ENCODE measurements at regions of chr4 and their contacts with region 1.

Region 1: GRCh38 chr4:113781439-113782040 is 20.0 kb upstream of the CAMK2D start:
- DNase-seq: no peak
- ATAC-seq: peak; percentile 80
- H3K4me3 ChIP-seq: no peak overlapping the region
- H3K27ac ChIP-seq: no peak overlapping the region
- H3K4me1 ChIP-seq: no peaks in the 10 kb centered on the region
- H3K27me3 ChIP-seq: no peaks in the 10 kb centered on the region
- CTCF ChIP-seq: peak; percentile 45 to 47 (median 47); a peak in 4 of 6 replicates
- EP300 ChIP-seq: no peak
- POLR2A ChIP-seq: no peak
- RAD21 ChIP-seq: peak; percentile 65

Region 2: DNA sequence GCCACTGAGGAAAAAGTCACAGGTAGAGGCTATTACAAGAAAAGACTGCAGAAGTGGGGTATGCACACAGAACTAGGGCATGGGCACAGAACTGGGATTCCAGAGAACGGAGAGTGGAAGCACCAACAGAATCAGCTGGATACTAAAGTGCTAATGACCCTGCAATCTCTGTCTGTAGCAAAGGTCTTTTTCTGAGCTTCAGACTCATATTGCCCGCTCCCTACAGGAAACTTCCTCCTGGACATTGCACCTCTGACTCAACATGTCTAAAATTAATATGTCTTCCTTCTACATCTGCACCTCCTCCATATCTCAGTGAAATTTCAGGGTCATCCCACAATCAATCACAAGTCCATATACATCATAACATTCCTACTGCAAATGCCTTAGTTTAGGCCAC is 14.7 kb before region 1 on chr4:
- CTCF ChIA-PET with region 1: interaction called, 5 read pairs
- POLR2A ChIA-PET with region 1: interaction called, 4 read pairs
- RAD21 ChIA-PET with region 1: interaction called, 7 read pairs
- SMC1A ChIA-PET with region 1: interaction called, 27 read pairs
- in situ Hi-C with region 1: no loop called
- intact Hi-C with region 1: no loop called
- DNase-seq: no peak
- ATAC-seq: no peak
- H3K4me3 ChIP-seq: no peak overlapping the region
- H3K27ac ChIP-seq: no peak overlapping the region
- H3K4me1 ChIP-seq: no peaks in the 10 kb centered on the region
- H3K27me3 ChIP-seq: no peaks in the 10 kb centered on the region
- CTCF ChIP-seq: no peak
- EP300 ChIP-seq: no peak
- POLR2A ChIP-seq: no peak
- RAD21 ChIP-seq: no peak

Region 3: GRCh38 chr4:113806850-113807249 is 25.3 kb after region 1 on chr4:
- CTCF ChIA-PET with region 1: interaction called, 5 read pairs
- POLR2A ChIA-PET with region 1: no interaction called
- RAD21 ChIA-PET with region 1: interaction called, 3 read pairs
- SMC1A ChIA-PET with region 1: interaction called, 10 read pairs
- in situ Hi-C with region 1: no loop called
- intact Hi-C with region 1: no loop called
- DNase-seq: no peak
- ATAC-seq: peak; percentile 39; the same call in 2 of the 3 replicates
- H3K4me3 ChIP-seq: no peak overlapping the region
- H3K27ac ChIP-seq: peak overlapping the region; percentile 4; the same call in 1 of the 2 replicates
- H3K4me1 ChIP-seq: peaks cover 3% of the 10 kb centered on the region; the same call in 1 of the 2 replicates
- H3K27me3 ChIP-seq: no peaks in the 10 kb centered on the region
- CTCF ChIP-seq: no peak
- EP300 ChIP-seq: no peak
- POLR2A ChIP-seq: no peak
- RAD21 ChIP-seq: no peak

Region 4: DNA sequence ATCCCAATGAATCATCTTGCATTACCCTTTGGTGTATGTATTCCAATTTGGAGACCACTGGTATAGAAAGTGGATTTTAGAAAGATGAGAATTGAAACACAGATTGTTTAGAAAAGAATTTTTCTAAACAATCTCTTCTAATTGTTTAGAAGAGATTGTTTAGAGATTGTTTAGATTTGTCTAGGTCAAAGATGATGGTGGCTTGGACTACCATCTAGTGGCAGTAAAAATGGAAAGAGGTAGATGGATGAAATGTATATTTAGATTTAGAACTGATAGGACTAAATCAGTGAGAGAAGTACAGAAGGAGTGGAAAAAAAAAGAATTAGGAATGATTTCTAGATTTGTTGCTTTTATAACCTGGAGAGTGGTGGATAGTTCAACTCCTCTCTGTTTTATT is 127.3 kb after region 1 on chr4:
- CTCF ChIA-PET with region 1: interaction called, 4 read pairs
- POLR2A ChIA-PET with region 1: no interaction called
- RAD21 ChIA-PET with region 1: no interaction called
- SMC1A ChIA-PET with region 1: interaction called, 4 read pairs
- in situ Hi-C with region 1: no loop called
- intact Hi-C with region 1: loop called (anchors 5 kb)
- DNase-seq: no peak
- ATAC-seq: peak; percentile 52; the same call in 1 of the 3 replicates
- H3K4me3 ChIP-seq: no peak overlapping the region
- H3K27ac ChIP-seq: no peak overlapping the region
- H3K4me1 ChIP-seq: no peaks in the 10 kb centered on the region
- H3K27me3 ChIP-seq: no peaks in the 10 kb centered on the region
- CTCF ChIP-seq: peak in 1 of 3 experiments; percentile 24; a peak in 2 of 6 replicates
- EP300 ChIP-seq: no peak
- POLR2A ChIP-seq: no peak
- RAD21 ChIP-seq: peak; percentile 77

Region 5: DNA sequence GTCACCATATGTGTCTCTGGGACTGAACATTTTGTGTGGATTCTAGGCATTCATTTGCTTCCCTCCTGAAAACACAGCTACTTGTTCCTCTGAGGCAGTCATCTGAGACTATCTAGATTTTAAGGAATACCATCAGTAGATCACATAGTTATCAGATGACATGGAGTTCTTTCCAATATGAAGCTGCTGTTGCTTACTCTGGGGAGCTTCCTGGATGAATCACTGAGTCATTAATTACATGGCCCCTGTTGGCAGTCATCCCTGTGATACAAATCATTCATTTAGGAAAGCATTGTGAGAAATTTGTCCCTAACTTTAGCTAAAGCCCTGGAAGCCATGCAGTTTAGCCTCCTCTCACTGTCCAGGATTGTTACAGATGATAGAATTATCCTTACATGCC is 296.1 kb after region 1 on chr4:
- CTCF ChIA-PET with region 1: interaction called, 12 read pairs
- POLR2A ChIA-PET with region 1: no interaction called
- RAD21 ChIA-PET with region 1: interaction called, 3 read pairs
- SMC1A ChIA-PET with region 1: no interaction called
- in situ Hi-C with region 1: loop called (anchors 10 kb)
- intact Hi-C with region 1: loop called (anchors 5 kb)
- DNase-seq: no peak
- ATAC-seq: no peak
- H3K4me3 ChIP-seq: no peak overlapping the region
- H3K27ac ChIP-seq: no peak overlapping the region
- H3K4me1 ChIP-seq: no peaks in the 10 kb centered on the region
- H3K27me3 ChIP-seq: no peaks in the 10 kb centered on the region
- CTCF ChIP-seq: no peak
- EP300 ChIP-seq: no peak
- POLR2A ChIP-seq: no peak
- RAD21 ChIP-seq: no peak

Region 6: GRCh38 chr4:114116861-114117260 is 335.3 kb after region 1 on chr4:
- CTCF ChIA-PET with region 1: no interaction called
- POLR2A ChIA-PET with region 1: no interaction called
- RAD21 ChIA-PET with region 1: no interaction called
- SMC1A ChIA-PET with region 1: no interaction called
- in situ Hi-C with region 1: no loop called
- intact Hi-C with region 1: no loop called
- DNase-seq: no peak
- ATAC-seq: no peak
- H3K4me3 ChIP-seq: no peak overlapping the region
- H3K27ac ChIP-seq: no peak overlapping the region
- H3K4me1 ChIP-seq: no peaks in the 10 kb centered on the region
- H3K27me3 ChIP-seq: no peaks in the 10 kb centered on the region
- CTCF ChIP-seq: no peak
- EP300 ChIP-seq: no peak
- POLR2A ChIP-seq: no peak
- RAD21 ChIP-seq: no peak

Measured in GM12878 (cell line).